K562 (cell line): ENCODE measurements at regions of chr6 and their contacts with region 1.

Region 1: GRCh38 chr6:26568601-26569432 is 27.9 kb upstream of the ABT1 start:
- DNase-seq: peak; percentile 82 to 96 (median 84)
- ATAC-seq: peak; percentile 75
- H3K4me3 ChIP-seq: peak overlapping the region; percentile 75
- H3K27ac ChIP-seq: peak overlapping the region; percentile 92
- H3K4me1 ChIP-seq: peaks cover 3 to 8% of the 10 kb centered on the region in 2 experiments; a peak in 2 of 5 replicates
- H3K27me3 ChIP-seq: no peaks in the 10 kb centered on the region
- CTCF ChIP-seq: peak; percentile 80 to 83 (median 81)
- EP300 ChIP-seq: peak; percentile 76
- POLR2A ChIP-seq: peak; percentile 24; the same call in 1 of the 2 replicates
- RAD21 ChIP-seq: peak; percentile 88 to 90

Region 2: DNA sequence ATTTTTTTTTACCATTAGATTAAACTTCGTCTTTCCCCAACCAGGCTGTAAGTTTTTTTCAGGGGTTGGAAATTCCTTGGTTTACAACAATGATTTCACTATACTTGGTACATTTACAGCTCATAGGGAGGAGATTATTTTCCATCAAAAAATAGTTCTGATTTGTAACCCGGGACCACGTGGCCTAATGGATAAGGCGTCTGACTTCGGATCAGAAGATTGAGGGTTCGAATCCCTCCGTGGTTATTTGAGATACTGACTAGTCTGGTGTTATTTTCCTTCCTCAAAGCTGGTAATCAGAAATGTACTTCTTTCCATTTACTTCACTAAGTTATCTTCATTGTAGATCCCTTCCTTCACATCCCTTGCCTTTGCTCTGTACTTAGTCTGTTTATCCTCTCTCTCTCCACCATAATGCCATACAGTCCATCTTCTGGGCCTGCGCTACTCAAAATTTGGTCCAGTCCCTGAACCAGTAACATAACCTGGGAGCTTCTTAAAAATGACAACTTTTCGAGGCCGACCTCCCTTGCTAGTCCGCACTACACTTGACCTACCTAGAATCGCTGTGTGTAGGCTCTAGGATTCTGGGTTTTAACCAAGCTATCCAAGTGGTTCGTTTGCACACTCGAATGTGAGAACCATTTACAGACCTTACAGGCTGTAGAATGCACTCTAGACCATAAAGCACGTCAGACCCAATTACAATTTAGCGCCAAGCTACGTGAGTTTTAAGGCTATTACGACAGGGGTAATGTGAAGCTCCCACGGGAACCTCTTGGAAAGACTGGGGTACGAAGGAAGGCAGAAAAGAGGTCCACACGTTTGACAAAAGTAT is 246.0 kb before region 1 on chr6:
- CTCF ChIA-PET with region 1: no interaction called
- POLR2A ChIA-PET with region 1: interaction called, 9 read pairs
- in situ Hi-C with region 1: no loop called
- intact Hi-C with region 1: loop called (anchors 5 kb)
- DNase-seq: peak in 3 of 4 experiments; percentile 43 to 96 (median 81)
- ATAC-seq: peak; percentile 62
- H3K4me3 ChIP-seq: peak overlapping the region; percentile 59
- H3K27ac ChIP-seq: peak overlapping the region; percentile 75
- H3K4me1 ChIP-seq: peaks cover 8 to 24% of the 10 kb centered on the region in 2 experiments
- H3K27me3 ChIP-seq: no peaks in the 10 kb centered on the region
- CTCF ChIP-seq: no peak
- EP300 ChIP-seq: peak; percentile 54
- POLR2A ChIP-seq: no peak
- RAD21 ChIP-seq: peak in 1 of 2 experiments; percentile 27; a peak in 1 of 4 replicates

Region 3: DNA sequence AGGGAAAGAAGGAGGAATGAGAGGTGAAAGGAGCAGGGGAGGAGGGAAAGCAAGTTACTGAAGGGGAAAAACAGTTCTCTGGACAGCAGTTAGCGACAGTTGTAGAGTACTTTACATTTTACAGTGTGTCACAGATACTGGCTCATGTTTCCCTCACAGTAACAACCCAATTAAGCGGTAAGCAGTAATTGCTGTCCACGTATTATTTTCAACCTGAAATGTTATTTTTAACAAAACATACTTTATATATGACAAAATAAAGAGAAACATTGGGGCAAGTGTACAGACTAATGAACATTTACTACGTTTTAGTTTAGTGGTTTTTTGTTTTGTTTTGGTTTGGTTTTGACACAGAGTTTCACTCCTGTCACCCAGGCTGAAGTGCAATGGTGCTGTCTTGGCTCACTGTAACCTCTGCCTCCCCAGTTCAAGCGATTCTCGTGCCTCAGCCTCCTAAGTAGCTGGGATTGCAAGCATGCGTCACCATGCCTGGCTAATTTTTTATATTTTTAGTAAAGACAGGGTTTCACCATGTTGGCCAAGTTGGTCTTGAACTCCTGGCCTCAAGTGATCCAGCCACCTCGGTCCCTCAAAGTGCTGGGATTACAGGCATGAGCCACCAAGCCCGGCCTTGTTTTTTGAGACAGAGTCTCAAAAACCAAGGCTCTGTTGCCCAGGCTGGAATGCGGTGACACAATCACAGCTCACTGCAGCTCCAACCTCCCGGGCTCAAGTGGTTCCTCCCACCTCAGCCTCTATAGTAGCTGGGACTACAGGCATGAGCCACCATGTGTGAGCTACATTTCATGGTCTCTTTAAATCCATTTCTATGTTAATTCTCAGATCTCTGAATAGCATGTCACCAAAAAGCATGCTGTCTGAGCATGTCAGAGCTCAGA is 226.5 kb before region 1 on chr6:
- CTCF ChIA-PET with region 1: interaction called, 23 read pairs
- POLR2A ChIA-PET with region 1: interaction called, 18 read pairs
- in situ Hi-C with region 1: loop called (anchors 10 kb)
- intact Hi-C with region 1: loop called (anchors 1 kb)
- DNase-seq: no peak
- ATAC-seq: peak; percentile 16
- H3K4me3 ChIP-seq: no peak overlapping the region
- H3K27ac ChIP-seq: no peak overlapping the region; the same call in 2 of the 3 replicates
- H3K4me1 ChIP-seq: peaks cover 11 to 54% of the 10 kb centered on the region in 2 experiments
- H3K27me3 ChIP-seq: no peaks in the 10 kb centered on the region
- CTCF ChIP-seq: no peak; a peak in 1 of 6 replicates
- EP300 ChIP-seq: no peak
- POLR2A ChIP-seq: no peak
- RAD21 ChIP-seq: no peak

Region 4: GRCh38 chr6:26493258-26493657 is 75.6 kb before region 1 on chr6:
- CTCF ChIA-PET with region 1: no interaction called
- POLR2A ChIA-PET with region 1: no interaction called
- in situ Hi-C with region 1: no loop called
- intact Hi-C with region 1: loop called (anchors 2 kb)
- DNase-seq: peak; percentile 38 to 86 (median 68)
- ATAC-seq: peak; percentile 95
- H3K4me3 ChIP-seq: no peak overlapping the region
- H3K27ac ChIP-seq: no peak overlapping the region
- H3K4me1 ChIP-seq: peaks cover 8 to 40% of the 10 kb centered on the region in 2 experiments
- H3K27me3 ChIP-seq: no peaks in the 10 kb centered on the region
- CTCF ChIP-seq: peak; percentile 62 to 87 (median 67)
- EP300 ChIP-seq: peak; percentile 68
- POLR2A ChIP-seq: no peak
- RAD21 ChIP-seq: peak; percentile 78 to 93

Region 5: DNA sequence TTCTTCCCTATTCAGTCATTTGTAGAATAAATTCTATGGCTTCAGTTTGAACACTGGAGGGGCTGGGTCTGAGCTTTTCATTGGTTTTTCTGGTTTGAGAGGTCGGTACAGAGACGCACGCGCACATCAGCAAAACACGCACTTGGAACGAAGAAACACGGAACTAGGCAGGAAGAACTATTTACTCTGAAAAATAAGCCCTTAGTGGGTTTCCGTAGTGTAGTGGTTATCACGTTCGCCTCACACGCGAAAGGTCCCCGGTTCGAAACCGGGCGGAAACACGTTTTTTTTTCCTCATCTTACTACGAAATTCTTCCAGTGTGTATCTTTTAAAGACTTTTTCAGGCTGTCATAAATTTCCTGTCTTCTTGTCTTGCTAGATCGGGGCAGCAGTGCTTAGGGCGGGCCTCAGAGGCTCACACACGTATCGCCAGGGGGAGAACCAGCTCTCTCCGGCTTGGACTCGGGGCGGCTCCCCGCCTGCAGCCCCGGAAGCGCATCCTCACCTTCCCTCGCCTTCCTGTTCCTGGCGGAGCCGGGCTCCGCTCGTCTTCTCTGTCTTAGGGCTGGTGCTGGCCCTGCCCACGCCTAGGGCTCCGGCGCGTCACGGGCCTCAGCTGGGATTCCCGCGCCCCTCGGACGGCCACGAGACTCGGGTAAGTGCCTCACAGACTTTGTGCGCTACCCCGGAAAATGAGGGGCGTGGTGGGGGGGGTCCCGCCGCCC is 30.8 kb before region 1 on chr6 and contains the start of gene HMGN4:
- CTCF ChIA-PET with region 1: no interaction called
- POLR2A ChIA-PET with region 1: interaction called, 18 read pairs
- in situ Hi-C with region 1: no loop called
- intact Hi-C with region 1: loop called (anchors 1 kb)
- DNase-seq: peak; percentile 90 to 95 (median 91)
- ATAC-seq: peak; percentile 91
- H3K4me3 ChIP-seq: peak within 1 kb of the TSS; percentile 67
- H3K27ac ChIP-seq: peak within 1 kb of the TSS; percentile 86
- H3K4me1 ChIP-seq: peaks cover 14 to 22% of the 10 kb centered on the region in 2 experiments
- H3K27me3 ChIP-seq: no peaks in the 10 kb centered on the region
- CTCF ChIP-seq: peak in 2 of 3 experiments; percentile 25; a peak in 1 of 6 replicates
- EP300 ChIP-seq: peak; percentile 72
- POLR2A ChIP-seq: peak; percentile 88
- RAD21 ChIP-seq: peak in 1 of 2 experiments; percentile 48; a peak in 3 of 4 replicates
- polyA plus RNA-seq, gene HMGN4: 35.4 to 41.1 TPM

Region 6: GRCh38 chr6:26596579-26597388 is 28.0 kb after region 1 on chr6 and contains the start of gene ABT1:
- CTCF ChIA-PET with region 1: interaction called, 8 read pairs
- POLR2A ChIA-PET with region 1: interaction called, 141 read pairs
- in situ Hi-C with region 1: no loop called
- intact Hi-C with region 1: loop called (anchors 1 kb)
- DNase-seq: peak; percentile 95 to 100 (median 97)
- ATAC-seq: peak; percentile 83
- H3K4me3 ChIP-seq: peak within 1 kb of the TSS; percentile 91
- H3K27ac ChIP-seq: peak within 1 kb of the TSS; percentile 88
- H3K4me1 ChIP-seq: peaks cover 16 to 19% of the 10 kb centered on the region in 2 experiments; a peak in 4 of 5 replicates
- H3K27me3 ChIP-seq: no peaks in the 10 kb centered on the region
- CTCF ChIP-seq: no peak; a peak in 1 of 6 replicates
- EP300 ChIP-seq: peak; percentile 82
- POLR2A ChIP-seq: peak; percentile 97
- RAD21 ChIP-seq: 0 out of 4 replicates have a peak, but pooled peaks of 1 of the 2 experiments have one; percentile 4
- polyA plus RNA-seq, gene ABT1: 8.8 to 25.2 TPM

Region 7: GRCh38 chr6:26662642-26663041 is 93.8 kb after region 1 on chr6:
- CTCF ChIA-PET with region 1: no interaction called
- POLR2A ChIA-PET with region 1: no interaction called
- in situ Hi-C with region 1: no loop called
- intact Hi-C with region 1: no loop called
- DNase-seq: no peak
- ATAC-seq: no peak
- H3K4me3 ChIP-seq: no peak overlapping the region
- H3K27ac ChIP-seq: no peak overlapping the region
- H3K4me1 ChIP-seq: peaks cover 3 to 9% of the 10 kb centered on the region in 2 experiments; a peak in 3 of 5 replicates
- H3K27me3 ChIP-seq: peaks cover 10 to 16% of the 10 kb centered on the region in 2 experiments
- CTCF ChIP-seq: no peak
- EP300 ChIP-seq: no peak
- POLR2A ChIP-seq: no peak
- RAD21 ChIP-seq: no peak

Region 8: GRCh38 chr6:27119329-27119728 is 550.5 kb after region 1 on chr6:
- CTCF ChIA-PET with region 1: no interaction called
- POLR2A ChIA-PET with region 1: no interaction called
- in situ Hi-C with region 1: no loop called
- intact Hi-C with region 1: no loop called
- DNase-seq: no peak
- ATAC-seq: no peak
- H3K4me3 ChIP-seq: no peak overlapping the region
- H3K27ac ChIP-seq: no peak overlapping the region
- H3K4me1 ChIP-seq: peaks cover 10 to 13% of the 10 kb centered on the region in 2 experiments; a peak in 3 of 5 replicates
- H3K27me3 ChIP-seq: no peaks in the 10 kb centered on the region
- CTCF ChIP-seq: no peak
- EP300 ChIP-seq: no peak
- POLR2A ChIP-seq: peak; percentile 61
- RAD21 ChIP-seq: no peak